HCT116 (cell line): ENCODE measurements at regions of chr17 and their contacts with region 1.

Region 1: GRCh38 chr17:1055751-1056645 is 59.1 kb downstream of the TIMM22 start:
- DNase-seq: no peak
- ATAC-seq: peak; percentile 68
- H3K4me3 ChIP-seq: no peak overlapping the region
- H3K27ac ChIP-seq: no peak overlapping the region
- H3K4me1 ChIP-seq: peaks cover 7 to 14% of the 10 kb centered on the region in 2 experiments
- H3K27me3 ChIP-seq: no peaks in the 10 kb centered on the region
- CTCF ChIP-seq: peak; percentile 34 to 73 (median 57); a peak in 5 of 6 replicates
- POLR2A ChIP-seq: no peak
- RAD21 ChIP-seq: peak; percentile 70

Region 2: DNA sequence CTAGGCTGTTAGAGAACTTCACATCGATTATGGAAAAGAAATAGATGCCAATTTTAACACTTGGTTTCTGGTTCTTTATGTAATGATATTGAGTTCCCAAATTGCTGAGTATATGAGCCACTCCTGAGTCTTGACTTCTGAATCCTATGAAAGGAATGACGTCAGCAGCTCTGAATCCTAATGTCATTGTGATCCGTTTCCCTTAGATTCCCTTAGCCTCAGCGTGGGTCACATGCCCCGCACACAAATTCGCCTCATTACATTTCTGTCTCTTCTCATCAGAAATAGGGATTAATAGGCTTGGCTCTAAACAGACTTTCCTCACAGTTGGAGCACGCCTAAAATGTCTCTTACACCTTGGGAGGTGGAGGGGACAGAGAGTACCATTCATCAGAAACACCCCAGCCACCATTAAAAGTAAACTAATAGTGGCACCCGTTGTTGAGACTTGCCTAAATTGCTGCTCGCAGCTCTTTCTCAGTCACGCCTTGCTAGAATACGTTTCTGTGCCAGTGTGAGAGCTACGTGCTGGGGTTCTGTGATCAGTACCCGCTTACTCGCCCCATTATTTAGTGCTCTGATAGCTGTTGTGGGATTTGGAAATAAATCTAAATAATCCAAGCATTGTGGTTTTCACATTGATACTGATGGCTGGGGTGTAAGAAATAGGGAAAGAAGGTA is 266.7 kb before region 1 on chr17:
- CTCF ChIA-PET with region 1: no interaction called
- POLR2A ChIA-PET with region 1: no interaction called
- RAD21 ChIA-PET with region 1: no interaction called
- intact Hi-C with region 1: no loop called
- DNase-seq: no peak
- ATAC-seq: no peak
- H3K4me3 ChIP-seq: no peak overlapping the region
- H3K27ac ChIP-seq: no peak overlapping the region
- H3K4me1 ChIP-seq: no peaks in the 10 kb centered on the region; a peak in 1 of 4 replicates
- H3K27me3 ChIP-seq: no peaks in the 10 kb centered on the region
- CTCF ChIP-seq: no peak
- POLR2A ChIP-seq: no peak
- RAD21 ChIP-seq: no peak

Region 3: GRCh38 chr17:1083451-1084187 is 27.6 kb after region 1 on chr17:
- CTCF ChIA-PET with region 1: interaction called, 12 read pairs
- POLR2A ChIA-PET with region 1: no interaction called
- RAD21 ChIA-PET with region 1: no interaction called
- intact Hi-C with region 1: no loop called
- DNase-seq: no peak
- ATAC-seq: no peak
- H3K4me3 ChIP-seq: no peak overlapping the region
- H3K27ac ChIP-seq: no peak overlapping the region
- H3K4me1 ChIP-seq: peaks cover 34 to 53% of the 10 kb centered on the region in 2 experiments
- H3K27me3 ChIP-seq: no peaks in the 10 kb centered on the region
- CTCF ChIP-seq: no peak
- POLR2A ChIP-seq: no peak
- RAD21 ChIP-seq: no peak

Region 4: DNA sequence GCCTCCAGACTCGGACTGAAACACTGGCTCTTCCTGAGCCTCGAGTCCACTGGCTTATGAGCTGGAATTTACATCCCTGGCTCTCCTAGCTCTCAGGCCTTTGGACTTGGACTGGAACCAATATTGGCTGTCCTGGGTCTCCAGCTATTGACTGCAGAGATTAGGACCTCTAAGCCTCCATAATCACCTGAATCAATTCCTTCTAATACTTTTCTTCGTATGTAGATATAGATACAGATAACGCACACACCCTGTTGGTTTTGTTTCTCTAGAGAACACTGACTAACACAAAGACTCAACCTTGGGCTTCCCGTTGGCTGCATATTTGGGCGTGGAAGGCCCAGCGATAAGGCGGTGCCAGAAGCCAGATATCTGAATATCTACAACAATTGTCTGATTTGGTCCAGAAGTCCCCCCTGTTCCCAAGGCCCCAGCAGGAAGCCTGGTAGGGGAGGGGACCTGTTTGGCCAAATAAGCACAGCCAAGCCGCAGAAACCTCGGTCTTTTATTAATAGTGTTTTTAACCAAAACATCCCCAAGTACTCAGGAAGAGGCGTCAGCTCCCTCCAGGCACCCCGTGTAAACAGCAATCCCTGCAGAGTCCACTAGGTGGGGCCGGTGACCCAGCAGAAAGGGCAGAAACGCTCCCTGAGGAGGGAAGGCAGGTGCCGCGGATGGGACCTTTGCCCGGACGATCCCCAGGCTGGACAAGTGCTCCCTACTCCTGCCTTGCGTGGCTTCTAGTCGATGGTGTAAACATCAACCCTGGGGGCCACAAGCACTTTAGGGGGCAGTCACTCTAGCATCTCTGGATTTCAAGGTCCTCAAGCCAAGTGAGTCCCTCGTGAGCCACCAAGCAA is 66.8 kb after region 1 on chr17:
- CTCF ChIA-PET with region 1: interaction called, 18 read pairs
- POLR2A ChIA-PET with region 1: interaction called, 3 read pairs
- RAD21 ChIA-PET with region 1: interaction called, 7 to 8 read pairs
- intact Hi-C with region 1: no loop called
- DNase-seq: peak; percentile 42
- ATAC-seq: peak; percentile 98
- H3K4me3 ChIP-seq: no peak overlapping the region
- H3K27ac ChIP-seq: peak overlapping the region; percentile 15; the same call in 1 of the 2 replicates
- H3K4me1 ChIP-seq: peaks cover 7 to 13% of the 10 kb centered on the region in 2 experiments; a peak in 3 of 4 replicates
- H3K27me3 ChIP-seq: no peaks in the 10 kb centered on the region
- CTCF ChIP-seq: peak; percentile 84 to 88 (median 85); a peak in 5 of 6 replicates
- POLR2A ChIP-seq: no peak
- RAD21 ChIP-seq: peak; percentile 91

Region 5: DNA sequence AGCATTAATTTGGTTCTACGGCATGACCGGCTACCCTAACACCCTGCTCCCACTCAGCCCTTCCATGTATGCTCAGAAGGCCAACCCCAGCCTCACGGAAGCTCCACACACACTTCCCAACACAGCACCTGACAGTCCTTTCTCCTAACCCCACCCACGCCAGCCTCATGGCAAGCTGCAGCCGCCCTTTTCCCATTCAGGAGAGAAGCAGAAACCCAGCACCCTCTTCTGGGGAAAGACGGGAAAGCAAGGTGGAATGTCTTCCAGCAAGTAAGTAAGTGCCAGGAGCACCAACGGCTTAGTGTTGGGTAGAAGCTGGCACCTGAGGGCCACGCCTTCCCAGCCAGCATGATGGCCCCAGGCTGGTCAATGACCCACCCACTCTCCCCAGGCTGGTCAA is 91.7 kb after region 1 on chr17:
- CTCF ChIA-PET with region 1: interaction called, 114 read pairs
- POLR2A ChIA-PET with region 1: interaction called, 9 read pairs
- RAD21 ChIA-PET with region 1: interaction called, 20 to 23 read pairs
- intact Hi-C with region 1: loop called (anchors 1 kb)
- DNase-seq: peak; percentile 71
- ATAC-seq: peak; percentile 96
- H3K4me3 ChIP-seq: no peak overlapping the region
- H3K27ac ChIP-seq: no peak overlapping the region
- H3K4me1 ChIP-seq: peaks cover 5 to 15% of the 10 kb centered on the region in 2 experiments
- H3K27me3 ChIP-seq: no peaks in the 10 kb centered on the region
- CTCF ChIP-seq: peak; percentile 68 to 90 (median 75)
- POLR2A ChIP-seq: no peak
- RAD21 ChIP-seq: peak; percentile 94

Region 6: GRCh38 chr17:1251866-1252608 is 196.0 kb after region 1 on chr17:
- CTCF ChIA-PET with region 1: interaction called, 11 read pairs
- POLR2A ChIA-PET with region 1: no interaction called
- RAD21 ChIA-PET with region 1: no interaction called
- intact Hi-C with region 1: loop called (anchors 1 kb)
- DNase-seq: no peak
- ATAC-seq: no peak
- H3K4me3 ChIP-seq: no peak overlapping the region
- H3K27ac ChIP-seq: no peak overlapping the region
- H3K4me1 ChIP-seq: peaks cover 3 to 14% of the 10 kb centered on the region in 2 experiments; a peak in 2 of 4 replicates
- H3K27me3 ChIP-seq: no peaks in the 10 kb centered on the region
- CTCF ChIP-seq: no peak
- POLR2A ChIP-seq: no peak
- RAD21 ChIP-seq: no peak